ENCODE measurements at regions of chr7 and their contacts with region 1.

Region 1: DNA sequence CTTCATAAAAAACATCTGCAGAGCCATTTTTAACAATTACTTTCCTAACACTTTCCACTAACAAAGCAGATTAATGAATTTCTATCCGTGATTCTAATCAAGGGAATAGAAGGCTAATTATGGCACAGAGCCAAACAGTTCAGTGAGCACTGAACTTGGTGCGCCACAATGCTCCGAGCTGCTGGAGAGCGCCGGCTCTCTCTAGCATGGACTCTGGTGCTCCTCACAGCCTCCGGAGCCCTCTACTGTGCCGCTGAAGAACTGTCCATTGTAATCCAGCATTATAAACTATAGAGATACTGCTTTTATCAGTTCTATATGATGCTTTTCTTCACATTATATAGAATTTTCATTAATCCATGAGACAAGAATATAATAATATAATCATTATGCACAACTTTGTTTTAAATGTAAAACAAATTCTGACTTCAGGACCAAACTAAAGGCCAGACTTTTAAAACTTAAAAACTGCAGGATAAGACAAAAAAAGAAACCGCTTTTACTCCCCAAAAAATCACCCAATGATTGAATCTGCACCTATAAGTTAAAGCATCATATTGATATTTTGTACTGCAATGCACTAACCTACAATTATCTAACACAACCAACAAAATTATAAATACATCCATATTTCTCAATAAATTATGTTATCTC is 123.6 kb downstream of the RNF32 start:
- DNase-seq: no peak
- ATAC-seq: peak; percentile 100
- H3K4me3 ChIP-seq: no peak overlapping the region
- H3K27ac ChIP-seq: no peak overlapping the region
- H3K4me1 ChIP-seq: no peaks in the 10 kb centered on the region
- H3K27me3 ChIP-seq: no peaks in the 10 kb centered on the region
- CTCF ChIP-seq: peak; percentile 88

Region 2: GRCh38 chr7:156650042-156650441 is 114.1 kb before region 1 on chr7:
- CTCF ChIA-PET with region 1: interaction called, 3 read pairs
- POLR2A ChIA-PET with region 1: no interaction called
- in situ Hi-C with region 1: no loop called
- intact Hi-C with region 1: loop called (anchors 10 kb)
- DNase-seq: no peak
- ATAC-seq: peak; percentile 86
- H3K4me3 ChIP-seq: no peak overlapping the region
- H3K27ac ChIP-seq: no peak overlapping the region
- H3K4me1 ChIP-seq: no peaks in the 10 kb centered on the region
- H3K27me3 ChIP-seq: no peaks in the 10 kb centered on the region
- CTCF ChIP-seq: peak; percentile 67

Region 3: DNA sequence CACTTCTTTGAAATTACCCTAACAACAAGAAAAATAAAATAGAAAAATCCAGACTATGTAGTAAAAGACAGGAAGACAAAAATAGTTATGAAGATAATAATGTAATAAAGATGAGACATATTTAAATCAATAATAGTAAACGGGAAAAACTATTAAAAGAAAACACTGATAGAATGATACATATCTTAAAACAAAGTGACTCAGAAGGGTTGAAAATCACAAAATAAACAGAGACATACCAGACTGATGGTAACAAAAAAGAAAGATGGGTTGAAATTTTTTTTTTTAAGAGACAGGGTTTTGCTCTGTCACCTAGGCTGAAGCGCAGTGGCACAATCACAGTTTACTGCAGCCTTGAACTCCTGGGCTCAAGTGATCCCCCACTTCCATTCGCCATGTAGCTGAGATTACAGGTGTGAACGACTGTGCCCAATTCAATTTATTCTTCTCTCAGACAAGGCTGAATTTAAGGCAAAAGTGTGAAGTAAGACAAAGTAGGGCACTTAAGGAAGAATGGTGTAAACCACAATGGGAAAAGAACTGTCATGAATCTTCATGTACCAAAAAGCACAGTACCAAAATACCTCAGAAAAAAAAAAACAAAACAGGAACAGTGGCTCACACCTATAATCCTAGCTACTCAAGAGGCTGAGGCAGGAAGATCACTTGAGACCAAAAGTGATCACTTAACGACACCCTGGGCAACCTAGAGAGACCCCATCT is 81.4 kb after region 1 on chr7:
- CTCF ChIA-PET with region 1: no interaction called
- POLR2A ChIA-PET with region 1: no interaction called
- in situ Hi-C with region 1: no loop called
- intact Hi-C with region 1: no loop called
- DNase-seq: no peak
- ATAC-seq: no peak
- H3K4me3 ChIP-seq: no peak overlapping the region
- H3K27ac ChIP-seq: no peak overlapping the region
- H3K4me1 ChIP-seq: no peaks in the 10 kb centered on the region; the same call in 1 of the 2 replicates
- H3K27me3 ChIP-seq: no peaks in the 10 kb centered on the region
- CTCF ChIP-seq: no peak